Cardiac septum (tissue), 1 donor: ENCODE measurements at regions of chr14 and their contacts with region 1.

Region 1: GRCh38 chr14:67674481-67675169 is at the start of gene VTI1B:
- DNase-seq: peak; percentile 92
- total RNA-seq, gene VTI1B: 115 TPM

Region 2: DNA sequence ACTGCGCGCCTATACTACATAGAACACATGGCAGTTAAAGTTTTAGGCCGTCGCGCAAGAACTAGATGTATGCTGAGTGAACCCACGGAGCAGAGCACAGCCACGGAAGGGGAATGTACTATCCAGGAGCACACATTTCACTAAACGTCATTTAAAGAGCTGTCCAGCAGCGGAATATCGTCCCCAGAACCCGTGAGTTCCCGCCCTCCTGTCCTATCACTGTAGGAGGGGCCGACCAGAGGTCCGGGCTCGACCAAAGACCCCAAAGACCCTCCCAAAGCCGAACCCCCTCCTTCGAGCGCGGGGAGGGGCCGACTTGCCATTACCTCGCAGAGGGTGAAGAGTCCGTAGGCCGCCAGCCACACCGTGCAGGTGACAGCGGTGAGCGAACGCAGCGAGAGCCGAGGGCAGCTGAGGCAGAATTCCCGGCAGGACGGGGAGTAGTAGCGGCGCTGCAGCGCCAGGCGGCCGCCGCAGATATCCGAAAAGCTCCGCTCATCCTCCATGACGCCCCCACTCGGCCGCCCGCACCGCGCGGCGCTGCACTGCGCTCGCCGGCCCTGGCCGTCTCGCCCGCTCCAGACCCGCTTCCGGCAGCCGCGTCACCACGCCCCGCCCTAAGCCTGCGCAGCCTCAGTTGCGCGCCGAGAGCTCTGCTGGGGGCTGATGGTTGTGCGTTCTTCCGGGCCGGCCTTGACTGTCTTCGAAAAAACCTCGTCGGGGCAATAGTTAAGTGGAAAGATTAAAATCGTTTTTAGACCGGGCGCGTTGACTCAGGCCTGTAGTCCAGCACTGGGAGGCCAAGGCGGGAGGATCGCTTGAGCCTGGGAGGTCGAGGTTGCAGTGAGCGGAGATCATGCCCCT is 74.7 kb before region 1 on chr14 and contains the start of gene PIGH:
- intact Hi-C with region 1: loop called (anchors 1 kb)
- DNase-seq: peak; percentile 95
- total RNA-seq, gene PIGH: 10.6 TPM

Region 3: DNA sequence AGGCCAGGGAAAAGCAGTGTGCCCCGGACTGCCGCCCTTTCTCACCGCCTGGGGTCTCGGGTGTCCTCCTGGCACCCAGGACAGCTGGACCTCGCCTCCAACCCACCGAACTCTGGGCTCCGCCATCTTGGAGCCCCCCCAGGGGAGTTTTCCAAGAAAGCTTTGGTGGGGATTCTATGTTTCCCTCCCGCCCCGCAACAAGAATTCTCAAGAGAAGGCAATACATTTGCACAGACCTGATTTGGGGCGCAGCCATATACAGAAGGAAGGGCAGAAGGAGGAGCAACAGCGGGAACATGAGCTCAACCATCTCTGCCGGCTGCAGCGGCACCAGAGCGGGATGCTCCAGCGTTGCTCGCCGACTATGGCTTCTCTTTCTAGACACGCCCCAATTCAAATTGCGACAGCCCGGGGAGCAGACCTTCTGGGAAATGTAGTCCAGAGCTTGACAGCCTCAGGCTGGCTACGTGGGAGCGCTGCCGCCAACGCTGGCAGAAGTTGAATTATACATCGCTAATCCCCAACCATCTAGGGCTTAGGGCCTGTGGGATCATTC is 20.8 kb after region 1 on chr14 and contains the start of gene RDH11:
- intact Hi-C with region 1: loop called (anchors 1 kb)
- DNase-seq: peak; percentile 93
- total RNA-seq, gene RDH11: 18.3 TPM